GM10248 (cell line): ENCODE measurements at regions of chr2 and their contacts with region 1.

Region 1: DNA sequence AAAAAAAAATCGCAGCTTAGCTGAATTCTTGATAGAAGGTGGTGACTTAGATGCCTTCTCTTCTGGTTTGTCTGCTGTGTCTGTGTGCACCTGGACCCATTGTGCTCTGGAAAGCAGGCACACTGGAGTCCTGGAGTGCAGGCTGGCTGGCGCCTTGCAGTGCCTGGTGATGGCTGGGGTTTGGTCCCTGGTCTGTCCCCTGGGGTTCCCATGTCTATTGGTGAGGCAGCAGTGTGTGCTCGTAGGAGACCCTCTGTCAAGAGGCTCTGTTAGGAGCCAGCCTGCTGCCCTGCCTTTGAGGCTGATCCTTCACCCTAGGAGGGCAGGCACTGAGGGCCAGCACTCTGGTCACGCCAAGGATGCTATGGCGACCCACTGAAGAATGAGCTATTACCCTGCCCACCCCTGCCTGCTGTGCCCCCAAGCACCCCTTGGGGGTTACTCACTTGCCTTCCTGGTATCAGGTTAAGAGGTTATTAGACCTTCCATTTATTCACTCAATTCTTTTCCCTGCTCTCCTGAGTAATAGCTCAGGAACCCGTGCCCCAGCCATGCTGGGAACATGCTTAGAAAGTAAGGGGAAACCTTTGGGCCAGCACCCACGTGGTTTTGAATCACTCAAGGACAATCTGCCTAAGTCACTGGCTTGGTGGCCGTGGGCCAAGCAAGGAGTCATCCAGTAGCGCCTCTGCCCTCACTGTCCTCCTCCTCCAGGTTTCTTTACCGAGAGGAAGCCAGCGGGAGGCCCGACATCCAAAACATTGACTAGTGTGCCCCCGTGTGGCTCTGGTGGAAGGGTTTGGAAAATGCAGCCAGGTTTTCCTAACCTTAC is 284.5 kb downstream of the PRKCE start:
- DNase-seq: peak; percentile 80
- CTCF ChIP-seq: peak; percentile 70

Region 2: GRCh38 chr2:45643543-45644542 is 292.2 kb before region 1 on chr2:
- CTCF ChIA-PET with region 1: interaction called, 22 read pairs
- POLR2A ChIA-PET with region 1: no interaction called
- DNase-seq: peak; percentile 90
- CTCF ChIP-seq: peak; percentile 95

Region 3: DNA sequence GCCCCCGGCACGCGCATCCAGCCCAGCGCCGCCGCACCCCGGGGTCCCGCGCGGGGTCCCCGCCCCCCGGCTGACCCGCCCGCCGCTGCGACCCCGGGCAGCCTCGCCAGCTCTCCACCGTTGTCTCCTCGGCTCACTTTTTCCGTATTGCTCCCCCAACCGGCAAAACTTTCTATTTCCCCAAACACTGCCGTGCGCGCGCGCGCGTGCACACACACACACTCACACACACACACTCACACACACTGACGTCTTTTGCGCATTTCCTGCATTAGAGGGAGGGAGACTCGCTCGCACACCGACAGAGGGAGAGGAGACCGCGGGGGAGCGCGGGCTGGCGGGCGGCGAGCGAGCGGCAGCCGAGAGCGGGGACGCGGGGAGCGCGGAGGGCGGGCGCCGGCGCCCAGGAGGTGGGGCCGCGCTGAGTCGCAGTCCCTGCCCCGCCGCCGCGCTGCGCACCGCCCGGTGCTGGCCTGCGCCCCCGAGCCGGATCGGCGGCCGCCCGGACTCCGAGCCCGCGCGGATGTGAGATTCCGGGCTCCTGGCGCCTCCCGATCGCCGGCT is 285.1 kb before region 1 on chr2:
- CTCF ChIA-PET with region 1: interaction called, 22 read pairs
- POLR2A ChIA-PET with region 1: no interaction called
- DNase-seq: peak; percentile 91
- CTCF ChIP-seq: peak; percentile 32

Region 4: DNA sequence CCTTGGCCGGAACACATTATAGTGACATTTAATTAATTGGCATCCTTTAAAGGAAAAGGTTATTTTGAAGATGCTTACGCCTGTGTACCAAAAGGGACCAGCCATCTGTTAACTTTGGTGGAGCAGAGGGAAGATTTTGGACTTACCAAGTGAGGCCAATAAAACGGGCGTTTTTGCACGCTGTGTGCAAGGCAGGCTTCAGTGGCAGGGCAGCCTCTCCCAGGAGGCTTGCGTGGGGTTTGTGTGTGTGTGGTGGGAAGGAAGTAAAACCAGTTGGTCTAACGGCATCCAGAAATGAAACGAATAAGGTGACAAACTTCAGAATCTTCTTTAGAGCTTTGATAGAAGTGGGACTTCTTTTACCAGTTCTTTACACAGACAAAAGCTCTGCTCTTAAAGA is 92.9 kb before region 1 on chr2:
- CTCF ChIA-PET with region 1: interaction called, 10 read pairs
- POLR2A ChIA-PET with region 1: no interaction called
- DNase-seq: peak; percentile 36
- CTCF ChIP-seq: no peak

Region 5: DNA sequence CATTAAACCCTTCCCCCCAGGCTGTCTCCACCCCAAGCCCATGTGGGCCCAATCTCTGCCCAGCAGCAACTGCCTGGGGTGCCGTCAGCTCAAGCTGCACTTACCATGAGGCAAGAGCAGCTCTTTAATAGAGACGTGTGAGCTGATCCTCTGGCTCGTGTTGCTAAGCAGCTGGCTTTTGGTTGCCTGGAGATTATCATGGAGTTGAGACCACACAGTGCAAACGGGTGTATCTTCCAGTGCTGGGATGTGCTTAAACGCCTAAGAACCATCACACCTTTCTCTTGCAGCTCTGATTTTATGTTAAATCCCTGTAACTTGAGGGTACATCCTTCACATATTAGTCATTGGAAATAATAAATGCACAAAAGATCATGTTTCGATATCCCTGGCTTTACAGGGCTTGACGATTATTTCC is 13.4 kb before region 1 on chr2:
- CTCF ChIA-PET with region 1: interaction called, 22 read pairs
- POLR2A ChIA-PET with region 1: interaction called, 3 read pairs
- DNase-seq: no peak
- CTCF ChIP-seq: no peak

Region 6: DNA sequence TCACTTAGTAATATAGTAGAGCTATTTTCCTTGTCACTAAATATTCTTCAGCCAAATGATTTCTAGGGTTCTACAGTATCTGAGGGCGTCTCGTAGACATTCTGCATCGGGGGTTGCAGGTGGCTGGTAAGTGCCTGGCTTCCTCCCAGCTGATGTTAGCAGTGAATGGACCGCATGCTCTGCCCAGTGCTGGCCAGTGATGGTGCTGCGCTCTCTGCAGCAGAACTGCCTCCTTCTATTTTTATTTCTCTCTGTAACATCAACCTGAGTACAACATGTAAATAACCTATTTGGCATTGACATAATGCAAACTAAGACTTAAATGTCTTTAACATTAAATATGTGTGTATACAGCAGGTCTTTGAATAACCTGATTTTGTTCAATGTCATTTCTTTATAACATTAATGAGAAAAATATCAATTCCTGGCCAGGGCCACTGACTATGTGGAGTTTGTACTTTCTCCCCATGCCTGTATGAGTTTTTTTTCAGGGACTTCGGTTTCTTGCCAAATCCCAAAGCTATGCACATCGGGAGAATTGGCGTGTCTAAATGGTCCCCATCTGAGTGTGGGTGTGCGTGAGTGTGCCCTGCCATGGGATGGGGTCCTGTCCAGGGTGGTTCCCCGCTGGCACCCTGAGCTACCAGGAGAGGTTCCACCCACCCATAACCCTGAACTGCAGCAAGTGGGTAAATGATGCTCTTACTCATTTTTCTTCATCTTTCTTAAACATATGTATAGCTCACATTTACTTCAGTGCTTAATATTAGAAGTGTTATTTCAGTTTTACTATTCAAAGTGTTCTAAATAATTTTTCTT is 83.0 kb after region 1 on chr2:
- CTCF ChIA-PET with region 1: no interaction called
- POLR2A ChIA-PET with region 1: no interaction called
- DNase-seq: no peak
- CTCF ChIP-seq: no peak

Region 7: DNA sequence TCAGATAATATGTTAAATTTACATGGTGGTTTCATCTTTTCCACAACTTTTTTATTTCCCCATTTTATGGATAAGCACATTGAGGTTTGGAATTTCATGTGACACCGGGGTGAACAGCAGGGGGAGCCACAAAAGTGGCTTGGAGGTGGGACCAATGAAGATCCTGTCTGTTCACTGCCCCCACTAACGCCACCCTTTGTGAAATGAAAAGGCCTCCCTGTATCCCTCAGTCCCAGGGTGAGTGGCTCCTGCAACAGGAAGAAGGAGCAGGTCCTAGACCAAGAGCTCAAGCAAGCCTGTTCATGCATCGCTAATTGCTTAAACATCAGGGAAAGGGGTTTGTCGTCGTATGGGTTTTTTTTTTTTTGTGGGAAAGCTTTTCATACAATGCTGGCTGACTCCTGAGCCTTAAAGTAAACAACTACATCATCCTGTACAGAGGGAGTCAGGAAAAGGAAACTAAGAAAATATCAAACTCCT is 93.4 kb after region 1 on chr2:
- CTCF ChIA-PET with region 1: no interaction called
- POLR2A ChIA-PET with region 1: no interaction called
- DNase-seq: no peak
- CTCF ChIP-seq: peak; percentile 10